SK-N-SH (cell line): ENCODE measurements at regions of chr5 and their contacts with region 1.

Region 1: DNA sequence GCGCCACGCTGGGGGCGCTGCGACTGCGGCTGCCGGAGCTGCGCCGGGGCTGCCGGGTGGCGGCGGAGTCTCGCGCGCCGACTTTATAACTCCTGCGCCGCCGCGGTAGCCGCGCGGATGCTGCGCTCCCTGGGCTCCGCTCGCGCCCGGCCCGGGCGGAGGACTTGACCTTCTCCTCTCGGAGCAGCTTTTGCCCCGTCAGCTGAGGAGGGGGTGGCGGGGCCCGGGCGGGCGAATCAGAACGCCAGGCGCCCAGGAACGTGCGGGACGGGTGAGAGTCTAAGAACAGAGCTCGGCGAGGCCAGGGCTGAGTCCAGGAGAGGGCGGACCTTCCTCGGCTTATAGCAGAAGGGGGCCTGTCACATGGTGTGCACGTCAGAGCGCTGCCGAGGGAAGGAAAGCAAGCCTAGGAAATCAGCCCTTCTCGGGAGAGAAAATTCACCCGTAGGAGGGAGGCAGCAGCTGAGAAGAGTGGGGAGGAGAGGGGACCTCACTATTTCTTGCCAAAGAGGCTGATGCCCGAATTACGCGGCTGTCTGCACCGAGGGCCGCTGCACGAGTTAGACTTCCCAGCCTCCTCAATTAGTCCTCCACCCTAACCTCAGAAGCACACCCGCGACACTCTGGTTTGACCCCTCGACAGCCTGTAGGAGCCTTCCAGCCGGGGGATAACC is at the start of gene FOXD1:
- DNase-seq: peak; percentile 80
- H3K4me3 ChIP-seq: peak within 1 kb of the TSS; percentile 69 to 74
- H3K27ac ChIP-seq: peak within 1 kb of the TSS; percentile 74 to 93
- H3K4me1 ChIP-seq: peaks cover 10 to 12% of the 10 kb centered on the region in 2 experiments; a peak in 1 of 4 replicates
- H3K27me3 ChIP-seq: no peaks in the 10 kb centered on the region
- CTCF ChIP-seq: no peak
- EP300 ChIP-seq: peak in 1 of 2 experiments; percentile 66; a peak in 1 of 4 replicates
- RAD21 ChIP-seq: no peak
- polyA plus RNA-seq, gene FOXD1: 39.6 and 73.9 TPM in 2 replicates

Region 2: GRCh38 chr5:73088026-73088425 is 360.6 kb before region 1 on chr5:
- CTCF ChIA-PET with region 1: interaction called, 21 read pairs
- POLR2A ChIA-PET with region 1: no interaction called
- DNase-seq: no peak
- H3K4me3 ChIP-seq: no peak overlapping the region
- H3K27ac ChIP-seq: no peak overlapping the region
- H3K4me1 ChIP-seq: peaks cover 0 to 5% of the 10 kb centered on the region in 2 experiments; a peak in 1 of 4 replicates
- H3K27me3 ChIP-seq: no peaks in the 10 kb centered on the region
- CTCF ChIP-seq: no peak
- EP300 ChIP-seq: no peak
- RAD21 ChIP-seq: no peak

Region 3: GRCh38 chr5:73303148-73304079 is 145.2 kb before region 1 on chr5:
- CTCF ChIA-PET with region 1: interaction called, 12 read pairs
- POLR2A ChIA-PET with region 1: no interaction called
- DNase-seq: peak; percentile 49
- H3K4me3 ChIP-seq: no peak overlapping the region
- H3K27ac ChIP-seq: no peak overlapping the region
- H3K4me1 ChIP-seq: no peaks in the 10 kb centered on the region; a peak in 1 of 4 replicates
- H3K27me3 ChIP-seq: no peaks in the 10 kb centered on the region
- CTCF ChIP-seq: peak; percentile 18; the same call in 1 of the 2 replicates
- EP300 ChIP-seq: no peak
- RAD21 ChIP-seq: no peak

Region 4: GRCh38 chr5:73370640-73371583 is 77.7 kb before region 1 on chr5:
- CTCF ChIA-PET with region 1: no interaction called
- POLR2A ChIA-PET with region 1: no interaction called
- DNase-seq: no peak
- H3K4me3 ChIP-seq: peak overlapping the region; percentile 15 to 21; a peak in 3 of 4 replicates
- H3K27ac ChIP-seq: peak overlapping the region; percentile 88 to 99
- H3K4me1 ChIP-seq: peaks cover 0 to 35% of the 10 kb centered on the region in 2 experiments
- H3K27me3 ChIP-seq: no peaks in the 10 kb centered on the region
- CTCF ChIP-seq: no peak
- EP300 ChIP-seq: peak; percentile 81 to 100
- RAD21 ChIP-seq: no peak

Region 5: GRCh38 chr5:73419465-73420390 is 28.9 kb before region 1 on chr5:
- CTCF ChIA-PET with region 1: interaction called, 14 read pairs
- POLR2A ChIA-PET with region 1: no interaction called
- DNase-seq: peak; percentile 60
- H3K4me3 ChIP-seq: peak overlapping the region; percentile 8 to 17; a peak in 1 of 4 replicates
- H3K27ac ChIP-seq: peak overlapping the region in 1 of 2 experiments; percentile 80; a peak in 3 of 4 replicates
- H3K4me1 ChIP-seq: peaks cover 13 to 32% of the 10 kb centered on the region in 2 experiments
- H3K27me3 ChIP-seq: no peaks in the 10 kb centered on the region
- CTCF ChIP-seq: no peak
- EP300 ChIP-seq: no peak
- RAD21 ChIP-seq: no peak

Region 6: DNA sequence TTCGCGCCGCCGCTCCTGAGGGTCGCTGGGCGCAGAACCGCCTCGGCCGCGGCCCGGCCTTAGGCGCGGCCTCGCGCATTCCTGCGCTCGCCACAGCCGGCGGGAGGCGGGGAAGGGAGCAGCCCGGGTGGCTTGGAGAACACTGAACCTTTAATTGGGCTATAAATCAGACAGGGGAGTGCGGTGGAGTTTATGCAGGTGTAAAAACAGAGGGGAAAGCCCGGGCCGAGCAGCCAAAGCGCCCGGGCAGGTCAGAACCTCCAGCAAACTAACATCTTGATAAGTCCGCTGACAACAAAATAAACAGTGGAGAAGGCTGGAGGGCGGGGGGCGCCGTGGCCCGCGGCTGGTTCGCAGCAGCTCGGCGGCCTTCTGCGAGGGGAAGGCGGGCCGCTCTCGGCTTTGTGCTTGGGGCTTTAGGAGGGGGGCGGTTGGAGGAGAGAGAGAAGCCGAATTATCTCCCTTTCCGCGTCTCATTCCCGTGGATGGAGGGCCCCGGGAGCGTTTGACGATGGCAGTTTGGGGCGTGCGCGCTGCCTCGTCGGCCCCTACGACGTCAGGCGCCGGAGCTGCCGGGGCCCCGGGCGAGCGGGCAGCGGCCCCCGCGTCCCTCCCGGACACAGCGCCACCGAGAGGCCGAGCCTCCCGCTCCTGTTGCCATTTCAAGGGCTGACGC is 11.4 kb before region 1 on chr5:
- CTCF ChIA-PET with region 1: interaction called, 46 read pairs
- POLR2A ChIA-PET with region 1: no interaction called
- DNase-seq: peak; percentile 69
- H3K4me3 ChIP-seq: peak overlapping the region; percentile 37 to 38; a peak in 3 of 4 replicates
- H3K27ac ChIP-seq: peak overlapping the region; percentile 88 to 89
- H3K4me1 ChIP-seq: peaks cover 0 to 39% of the 10 kb centered on the region in 2 experiments; a peak in 3 of 4 replicates
- H3K27me3 ChIP-seq: no peaks in the 10 kb centered on the region
- CTCF ChIP-seq: peak; percentile 72
- EP300 ChIP-seq: 0 out of 4 replicates have a peak, but pooled peaks of 1 of the 2 experiments have one; percentile 22
- RAD21 ChIP-seq: peak; percentile 20; the same call in 1 of the 2 replicates

Region 7: DNA sequence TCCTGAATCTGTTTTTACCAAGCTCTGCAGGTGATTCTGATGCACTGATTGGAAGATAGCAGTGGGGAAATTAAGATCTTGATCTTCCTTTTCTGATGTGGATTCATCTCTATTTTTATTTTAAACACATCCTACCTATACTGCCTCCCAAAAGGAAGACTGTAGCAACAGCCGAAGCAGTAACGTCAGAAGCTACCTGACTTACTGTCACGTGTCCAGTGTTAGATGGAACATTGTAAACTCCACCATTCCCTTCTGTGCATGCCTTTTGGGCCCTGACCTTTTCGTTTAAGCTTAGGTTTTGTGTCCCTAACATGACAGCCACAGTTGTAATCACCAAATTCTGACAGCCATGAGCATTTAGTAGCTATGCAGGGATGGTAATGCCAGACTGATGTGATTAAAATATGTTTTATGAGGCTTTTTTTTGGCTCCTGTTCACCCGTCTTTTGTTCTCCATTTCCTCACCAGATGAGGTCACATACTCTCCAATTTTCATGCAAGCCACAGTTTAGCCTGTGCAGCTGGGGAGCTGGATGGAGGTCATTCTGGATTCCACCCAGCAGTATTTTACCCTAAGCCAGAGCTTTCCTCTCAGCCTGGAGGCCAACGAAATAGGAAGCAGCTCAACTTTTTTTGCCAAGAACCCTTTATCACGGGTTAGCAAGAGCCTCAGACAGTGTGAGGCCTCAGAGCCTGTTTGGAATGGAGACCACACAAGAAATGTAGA is 15.6 kb after region 1 on chr5:
- CTCF ChIA-PET with region 1: interaction called, 39 read pairs
- POLR2A ChIA-PET with region 1: no interaction called
- DNase-seq: no peak
- H3K4me3 ChIP-seq: no peak overlapping the region
- H3K27ac ChIP-seq: no peak overlapping the region
- H3K4me1 ChIP-seq: peaks cover 0 to 2% of the 10 kb centered on the region in 2 experiments; a peak in 1 of 4 replicates
- H3K27me3 ChIP-seq: no peaks in the 10 kb centered on the region
- CTCF ChIP-seq: no peak
- EP300 ChIP-seq: no peak
- RAD21 ChIP-seq: no peak

Region 8: GRCh38 chr5:73687357-73687756 is 238.8 kb after region 1 on chr5:
- CTCF ChIA-PET with region 1: no interaction called
- POLR2A ChIA-PET with region 1: no interaction called
- DNase-seq: no peak
- H3K4me3 ChIP-seq: no peak overlapping the region
- H3K27ac ChIP-seq: no peak overlapping the region
- H3K4me1 ChIP-seq: peaks cover 0 to 7% of the 10 kb centered on the region in 2 experiments; a peak in 2 of 4 replicates
- H3K27me3 ChIP-seq: no peaks in the 10 kb centered on the region
- CTCF ChIP-seq: no peak
- EP300 ChIP-seq: no peak
- RAD21 ChIP-seq: no peak